Prostate gland (tissue), 2 donors: ENCODE measurements at regions of chr2 and their contacts with region 1.

Region 1: GRCh38 chr2:237519506-237520245 is 32.6 kb downstream of the MLPH start:
- DNase-seq: no peak
- H3K4me3 ChIP-seq: no peak overlapping the region
- H3K27ac ChIP-seq: no peak overlapping the region
- H3K4me1 ChIP-seq: peaks cover 1% of the 10 kb centered on the region
- H3K27me3 ChIP-seq: no peaks in the 10 kb centered on the region
- CTCF ChIP-seq: no peak
- POLR2A ChIP-seq: no peak

Region 2: DNA sequence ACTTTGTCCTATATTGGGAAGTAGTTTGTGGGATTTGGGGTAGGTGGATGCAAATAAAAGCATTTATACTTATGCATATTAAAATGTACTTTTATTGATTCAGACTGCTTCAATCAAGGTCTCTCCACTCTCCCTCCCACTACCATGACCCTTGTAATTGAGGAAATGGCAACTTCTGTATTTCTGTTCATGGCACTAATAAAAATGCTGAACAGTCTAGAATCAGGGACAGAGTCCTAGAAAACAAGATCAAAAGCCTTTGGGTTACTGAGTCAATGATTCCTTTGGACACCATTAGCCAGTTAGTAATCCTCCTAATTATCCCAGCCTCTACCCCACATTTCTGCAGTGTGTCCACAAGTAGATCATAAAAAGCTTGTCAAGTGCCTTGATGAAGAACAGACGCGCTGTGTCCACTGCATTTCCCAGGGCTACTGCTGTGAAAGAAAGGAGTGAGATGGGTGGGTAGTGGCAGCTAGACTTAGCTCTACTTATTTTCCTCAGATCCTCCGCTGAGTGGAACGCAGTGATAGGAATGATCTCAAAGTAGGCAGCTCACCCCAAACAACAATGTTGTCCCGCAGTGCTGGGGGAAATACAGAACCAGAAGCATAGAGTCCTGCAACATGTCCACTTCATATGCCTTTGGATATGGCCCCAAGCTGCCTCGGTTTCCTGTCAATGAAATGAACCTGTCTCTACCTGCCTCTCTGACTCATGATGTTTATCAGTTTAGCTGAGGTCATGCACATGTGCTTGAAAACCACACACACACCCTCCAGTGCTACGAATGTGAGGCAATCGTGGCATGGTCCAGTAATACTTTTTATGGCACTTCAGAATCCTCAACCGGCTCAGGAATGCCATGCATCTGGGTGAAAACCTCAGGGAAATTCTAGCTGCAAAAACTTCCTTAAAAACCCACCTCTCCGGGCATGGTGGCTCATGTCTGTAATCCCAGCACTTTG is 221.2 kb before region 1 on chr2:
- intact Hi-C with region 1: no loop called
- DNase-seq: peak; percentile 13
- H3K4me3 ChIP-seq: no peak overlapping the region
- H3K27ac ChIP-seq: no peak overlapping the region
- H3K4me1 ChIP-seq: no peaks in the 10 kb centered on the region
- H3K27me3 ChIP-seq: no peaks in the 10 kb centered on the region
- CTCF ChIP-seq: no peak
- POLR2A ChIP-seq: no peak

Region 3: GRCh38 chr2:237563816-237564215 is 44.1 kb after region 1 on chr2:
- intact Hi-C with region 1: loop called (anchors 2 kb)
- DNase-seq: no peak
- H3K4me3 ChIP-seq: no peak overlapping the region
- H3K27ac ChIP-seq: no peak overlapping the region
- H3K4me1 ChIP-seq: no peaks in the 10 kb centered on the region
- H3K27me3 ChIP-seq: no peaks in the 10 kb centered on the region
- CTCF ChIP-seq: no peak
- POLR2A ChIP-seq: no peak

Region 4: DNA sequence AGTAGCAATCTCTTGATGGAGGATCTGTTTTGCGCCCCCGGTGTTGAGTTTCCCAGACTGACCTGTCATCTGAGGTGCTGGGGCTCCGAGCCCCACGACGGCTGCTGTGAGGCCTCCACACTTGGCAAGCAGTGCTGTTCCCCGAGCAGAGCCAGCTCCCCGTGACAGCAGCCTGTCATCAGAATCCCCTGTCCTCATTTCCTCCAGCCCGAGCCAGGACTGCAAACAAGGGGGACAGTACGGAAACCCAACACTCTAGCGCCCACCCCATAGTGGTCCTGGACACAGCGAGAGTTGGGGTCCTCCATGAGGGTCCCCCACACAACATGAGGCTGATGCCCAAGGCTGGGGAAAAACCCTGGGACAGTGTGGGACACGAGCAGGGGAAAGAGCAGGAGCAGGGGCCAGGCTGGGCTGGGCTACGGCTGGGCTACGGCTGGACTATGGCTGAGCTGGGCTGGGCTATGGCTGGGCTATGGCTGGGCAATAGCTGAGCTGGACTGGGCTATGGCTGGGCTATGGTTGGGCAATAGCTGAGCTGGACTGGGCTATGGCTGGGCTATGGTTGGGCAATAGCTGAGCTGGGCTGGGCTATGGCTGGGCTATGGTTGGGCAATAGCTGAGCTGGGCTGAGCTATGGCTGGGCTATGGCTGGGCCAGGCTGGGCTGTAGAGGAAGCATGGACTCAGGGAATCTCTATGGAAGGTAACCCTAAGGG is 617.3 kb after region 1 on chr2:
- intact Hi-C with region 1: no loop called
- DNase-seq: no peak
- H3K4me3 ChIP-seq: no peak overlapping the region
- H3K27ac ChIP-seq: no peak overlapping the region
- H3K4me1 ChIP-seq: no peaks in the 10 kb centered on the region
- H3K27me3 ChIP-seq: no peaks in the 10 kb centered on the region
- CTCF ChIP-seq: no peak
- POLR2A ChIP-seq: no peak